Natural killer cell (primary cell): ENCODE measurements at regions of chr6 and their contacts with region 1.

Region 1: DNA sequence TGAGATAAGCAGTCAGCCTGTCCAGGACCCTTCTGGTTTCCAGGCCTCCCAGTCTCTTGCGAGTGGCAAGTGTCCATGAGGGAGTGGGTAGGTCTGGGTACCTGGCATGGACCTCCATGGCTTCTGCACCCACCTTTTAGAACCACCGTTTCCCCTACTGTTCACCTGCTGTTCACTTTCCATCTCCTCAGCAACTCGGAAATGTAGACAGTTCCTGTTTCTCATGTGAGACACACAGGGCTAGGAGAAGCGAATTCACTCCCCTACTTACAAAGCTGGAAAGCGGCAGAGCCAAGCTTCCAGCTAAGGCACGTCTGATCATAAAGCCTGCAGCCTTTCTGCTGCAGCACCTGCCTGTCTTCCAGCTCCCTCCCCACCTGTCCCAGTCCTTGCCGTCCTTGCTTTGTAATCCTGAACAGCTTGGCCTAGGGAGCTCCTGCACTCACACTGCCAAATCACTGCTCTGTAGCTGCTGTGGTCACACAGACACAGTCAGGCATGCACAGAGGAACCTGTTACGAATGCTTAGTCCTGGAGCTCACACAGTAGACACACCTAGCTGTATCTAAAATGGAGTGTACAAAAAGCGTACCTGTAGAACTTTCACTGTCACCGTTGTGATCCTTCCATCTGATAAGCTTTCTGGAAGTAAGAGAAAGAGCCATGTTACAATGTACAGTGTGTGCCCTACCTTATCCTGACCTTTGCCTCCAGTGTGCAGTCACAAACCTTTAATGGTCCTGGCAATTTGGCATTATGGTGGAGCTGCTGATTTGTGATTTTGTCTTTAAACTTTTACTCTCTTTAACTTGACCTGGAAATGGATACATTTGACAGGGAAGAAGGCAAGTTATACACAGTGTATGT is 294.1 kb downstream of the NRN1 start:
- DNase-seq: no peak
- ATAC-seq: no peak
- H3K4me3 ChIP-seq: no peak overlapping the region
- H3K4me3 Mint-ChIP-seq: no peak overlapping the region
- H3K27ac ChIP-seq: no peak overlapping the region
- H3K27ac Mint-ChIP-seq: no peak overlapping the region
- H3K4me1 ChIP-seq: no peaks in the 10 kb centered on the region
- H3K4me1 Mint-ChIP-seq: peaks cover 8 to 13% of the 10 kb centered on the region in 2 donors
- H3K27me3 ChIP-seq: no peaks in the 10 kb centered on the region
- H3K27me3 Mint-ChIP-seq: no peaks in the 10 kb centered on the region
- CTCF ChIP-seq: no peak

Region 2: GRCh38 chr6:5422321-5422915 is 290.2 kb before region 1 on chr6:
- intact Hi-C with region 1: no loop called
- DNase-seq: peak in 1 of 2 donors; percentile 33
- ATAC-seq: peak in 2 of 3 donors; percentile 41 to 49
- H3K4me3 ChIP-seq: no peak overlapping the region
- H3K4me3 Mint-ChIP-seq: no peak overlapping the region
- H3K27ac ChIP-seq: no peak overlapping the region
- H3K27ac Mint-ChIP-seq: no peak overlapping the region
- H3K4me1 ChIP-seq: no peaks in the 10 kb centered on the region
- H3K4me1 Mint-ChIP-seq: peaks cover 5 to 22% of the 10 kb centered on the region in 2 donors
- H3K27me3 ChIP-seq: no peaks in the 10 kb centered on the region
- H3K27me3 Mint-ChIP-seq: no peaks in the 10 kb centered on the region
- CTCF ChIP-seq: peak; percentile 31

Region 3: DNA sequence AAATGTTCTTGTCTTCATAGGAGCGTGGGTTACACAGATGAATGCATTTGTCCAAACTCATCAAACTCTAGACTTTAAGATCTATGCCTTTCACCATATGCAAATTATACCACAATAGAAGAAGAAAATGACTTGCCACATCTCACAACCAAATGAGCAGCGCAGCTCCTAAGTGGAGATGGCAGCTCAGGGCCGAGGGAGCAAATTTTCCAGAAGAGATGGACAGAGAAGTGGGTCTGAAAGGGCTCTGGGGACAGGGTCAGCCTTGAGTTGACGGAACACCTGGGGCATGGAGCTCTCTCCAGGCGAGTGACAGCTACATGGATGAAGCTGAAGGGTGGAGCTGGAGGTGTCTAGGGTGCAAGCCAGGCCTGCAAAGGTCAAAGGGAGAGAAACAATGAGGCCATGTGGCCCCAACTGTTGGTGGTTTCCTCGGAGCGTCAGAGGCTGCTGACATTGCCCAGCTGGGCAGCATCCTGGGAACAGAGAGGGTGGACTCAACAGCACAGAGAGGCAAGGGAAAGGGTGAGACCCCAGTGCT is 65.8 kb after region 1 on chr6:
- intact Hi-C with region 1: loop called (anchors 2 kb)
- DNase-seq: no peak
- ATAC-seq: no peak
- H3K4me3 ChIP-seq: no peak overlapping the region
- H3K4me3 Mint-ChIP-seq: no peak overlapping the region
- H3K27ac ChIP-seq: no peak overlapping the region
- H3K27ac Mint-ChIP-seq: no peak overlapping the region
- H3K4me1 ChIP-seq: no peaks in the 10 kb centered on the region
- H3K4me1 Mint-ChIP-seq: peaks cover 0 to 4% of the 10 kb centered on the region in 2 donors
- H3K27me3 ChIP-seq: no peaks in the 10 kb centered on the region
- H3K27me3 Mint-ChIP-seq: no peaks in the 10 kb centered on the region
- CTCF ChIP-seq: no peak